Common myeloid progenitor, CD34-positive (primary cell): ENCODE measurements at regions of chr6 and their contacts with region 1.

Region 1: DNA sequence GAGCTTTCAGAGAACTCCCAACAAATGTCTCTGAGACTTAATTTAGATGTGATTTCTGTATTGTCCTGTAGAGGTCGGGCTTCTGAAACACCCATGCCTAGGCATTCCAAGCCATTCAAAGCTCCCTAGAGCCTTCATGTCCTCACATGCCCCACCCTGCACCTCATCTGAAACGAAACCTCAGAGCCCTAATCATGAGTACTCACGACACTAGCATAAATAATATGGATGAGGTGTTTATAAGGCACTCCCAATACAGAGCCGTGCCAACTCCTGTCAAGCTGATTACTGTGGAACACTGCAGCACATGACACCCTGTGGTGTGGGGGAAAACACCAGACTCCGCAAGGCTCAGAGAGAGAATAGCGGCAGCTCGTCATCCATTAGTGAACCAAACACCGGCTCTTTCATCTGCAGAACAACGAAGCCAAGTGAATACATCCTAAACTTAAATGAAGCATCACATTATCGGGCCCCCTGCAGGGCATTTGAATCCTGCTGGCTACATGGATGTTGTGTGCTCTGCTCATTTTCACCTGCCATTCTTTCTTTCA is 83.8 kb downstream of the FNDC1 start:
- DNase-seq: peak; percentile 38 to 68 (median 62)
- H3K4me3 ChIP-seq: peak overlapping the region in 1 of 7 experiments; percentile 47
- H3K27ac ChIP-seq: no peak overlapping the region
- H3K4me1 ChIP-seq: peaks cover 0 to 2% (median 0%) of the 10 kb centered on the region in 4 experiments
- H3K27me3 ChIP-seq: no peaks in the 10 kb centered on the region

Region 2: GRCh38 chr6:159233365-159234101 is 19.5 kb before region 1 on chr6:
- CTCF ChIA-PET with region 1: interaction called, 17 read pairs
- POLR2A ChIA-PET with region 1: no interaction called
- DNase-seq: peak in 1 of 3 donors; percentile 3
- H3K4me3 ChIP-seq: peak overlapping the region in 2 of 7 experiments; percentile 16 to 32
- H3K27ac ChIP-seq: no peak overlapping the region
- H3K4me1 ChIP-seq: peaks cover 0 to 9% (median 3%) of the 10 kb centered on the region in 4 experiments
- H3K27me3 ChIP-seq: peaks cover 20 to 72% (median 20%) of the 10 kb centered on the region in 5 experiments

Region 3: GRCh38 chr6:159565181-159565710 is 312.2 kb after region 1 on chr6:
- CTCF ChIA-PET with region 1: no interaction called
- POLR2A ChIA-PET with region 1: no interaction called
- DNase-seq: no peak
- H3K4me3 ChIP-seq: no peak overlapping the region
- H3K27ac ChIP-seq: no peak overlapping the region
- H3K4me1 ChIP-seq: no peaks in the 10 kb centered on the region
- H3K27me3 ChIP-seq: no peaks in the 10 kb centered on the region